HepG2 (cell line): ENCODE measurements at regions of chr7 and their contacts with region 1.

Region 1: GRCh38 chr7:45863715-45864114 is 9.2 kb downstream of the CCDC201 start:
- DNase-seq: peak; percentile 23
- ATAC-seq: peak; percentile 90
- H3K4me3 ChIP-seq: peak overlapping the region in 1 of 3 experiments; percentile 13; a peak in 1 of 6 replicates
- H3K27ac ChIP-seq: no peak overlapping the region
- H3K4me1 ChIP-seq: peaks cover 64% of the 10 kb centered on the region
- H3K27me3 ChIP-seq: peaks cover 3 to 33% of the 10 kb centered on the region in 2 experiments; a peak in 4 of 5 replicates
- CTCF ChIP-seq: peak; percentile 62
- EP300 ChIP-seq: no peak
- POLR2A ChIP-seq: no peak
- RAD21 ChIP-seq: 0 out of 2 replicates have a peak, but pooled peaks have one; percentile 37

Region 2: GRCh38 chr7:45663167-45663921 is 200.4 kb before region 1 on chr7:
- CTCF ChIA-PET with region 1: no interaction called
- POLR2A ChIA-PET with region 1: no interaction called
- in situ Hi-C with region 1: loop called (anchors 5 kb)
- intact Hi-C with region 1: no loop called
- DNase-seq: peak; percentile 25
- ATAC-seq: peak; percentile 92
- H3K4me3 ChIP-seq: no peak overlapping the region
- H3K27ac ChIP-seq: no peak overlapping the region
- H3K4me1 ChIP-seq: peaks cover 9% of the 10 kb centered on the region; the same call in 1 of the 2 replicates
- H3K27me3 ChIP-seq: peaks cover 0 to 17% of the 10 kb centered on the region in 2 experiments; a peak in 1 of 5 replicates
- CTCF ChIP-seq: peak; percentile 98
- EP300 ChIP-seq: no peak
- POLR2A ChIP-seq: no peak
- RAD21 ChIP-seq: peak; percentile 92

Region 3: GRCh38 chr7:45881759-45882464 is 18.2 kb after region 1 on chr7:
- CTCF ChIA-PET with region 1: no interaction called
- POLR2A ChIA-PET with region 1: interaction called, 117 read pairs
- in situ Hi-C with region 1: no loop called
- intact Hi-C with region 1: no loop called
- DNase-seq: peak; percentile 98
- ATAC-seq: peak; percentile 77
- H3K4me3 ChIP-seq: peak overlapping the region in 1 of 3 experiments; percentile 30; a peak in 1 of 6 replicates
- H3K27ac ChIP-seq: peak overlapping the region; percentile 93
- H3K4me1 ChIP-seq: peaks cover 84% of the 10 kb centered on the region
- H3K27me3 ChIP-seq: no peaks in the 10 kb centered on the region
- CTCF ChIP-seq: peak; percentile 20; the same call in 1 of the 2 replicates
- EP300 ChIP-seq: peak; percentile 88 to 99; a peak in 3 of 4 replicates
- POLR2A ChIP-seq: peak in 1 of 2 experiments; percentile 50; a peak in 1 of 4 replicates
- RAD21 ChIP-seq: no peak

Region 4: GRCh38 chr7:45890902-45891461 is 27.3 kb after region 1 on chr7:
- CTCF ChIA-PET with region 1: interaction called, 3 read pairs
- POLR2A ChIA-PET with region 1: interaction called, 117 read pairs
- in situ Hi-C with region 1: no loop called
- intact Hi-C with region 1: no loop called
- DNase-seq: peak; percentile 36
- ATAC-seq: no peak
- H3K4me3 ChIP-seq: peak overlapping the region; percentile 61 to 89 (median 84)
- H3K27ac ChIP-seq: peak overlapping the region; percentile 99
- H3K4me1 ChIP-seq: peaks cover 67% of the 10 kb centered on the region
- H3K27me3 ChIP-seq: no peaks in the 10 kb centered on the region; a peak in 1 of 5 replicates
- CTCF ChIP-seq: peak; percentile 46
- EP300 ChIP-seq: no peak
- POLR2A ChIP-seq: peak in 1 of 2 experiments; percentile 28; a peak in 1 of 4 replicates
- RAD21 ChIP-seq: 0 out of 2 replicates have a peak, but pooled peaks have one; percentile 10